ENCODE measurements at regions of chr17 and their contacts with region 1.

Region 1: GRCh38 chr17:73371285-73371684 is 59.5 kb upstream of the CDC42EP4 start:
- DNase-seq: no peak
- H3K4me3 Mint-ChIP-seq: no peak overlapping the region
- H3K27ac Mint-ChIP-seq: no peak overlapping the region
- H3K4me1 Mint-ChIP-seq: no peaks in the 10 kb centered on the region
- H3K27me3 Mint-ChIP-seq: peaks cover 7% of the 10 kb centered on the region

Region 2: DNA sequence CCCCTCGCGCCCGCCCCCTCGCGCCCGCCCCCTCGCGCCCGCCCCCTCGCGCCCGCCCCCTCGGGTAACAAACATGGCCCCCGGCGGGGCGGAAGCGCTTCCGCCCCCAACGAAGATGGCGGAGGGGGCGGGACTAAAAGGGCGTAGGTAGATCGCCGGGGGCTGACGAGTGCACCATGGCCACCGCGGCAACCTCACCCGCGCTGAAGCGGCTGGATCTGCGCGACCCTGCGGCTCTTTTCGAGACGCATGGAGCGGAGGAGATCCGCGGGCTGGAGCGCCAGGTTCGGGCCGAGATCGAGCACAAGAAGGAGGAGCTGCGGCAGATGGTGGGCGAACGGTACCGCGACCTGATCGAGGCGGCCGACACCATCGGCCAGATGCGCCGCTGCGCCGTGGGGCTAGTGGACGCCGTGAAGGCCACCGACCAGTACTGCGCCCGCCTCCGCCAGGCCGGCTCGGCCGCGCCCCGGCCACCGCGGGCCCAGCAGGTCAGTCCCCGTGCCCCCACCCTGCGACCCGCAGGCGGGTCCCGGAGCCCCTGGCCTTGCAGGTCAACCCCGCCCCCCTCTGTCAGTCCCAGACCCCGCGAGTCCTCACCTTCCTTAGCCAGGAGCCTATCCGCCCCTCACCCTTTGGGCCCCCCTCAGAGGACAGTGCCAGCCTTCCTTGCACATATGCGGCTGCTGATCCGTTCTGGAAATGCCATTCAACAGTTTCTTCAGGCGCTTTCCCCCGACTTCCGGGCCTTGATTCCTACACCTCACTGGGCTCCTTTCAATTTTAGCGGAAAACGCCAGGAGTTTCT is 178.2 kb before region 1 on chr17 and contains the start of gene COG1:
- intact Hi-C with region 1: loop called (anchors 1 kb)
- DNase-seq: peak; percentile 90
- H3K4me3 Mint-ChIP-seq: peak within 1 kb of the TSS; percentile 93
- H3K27ac Mint-ChIP-seq: peak within 1 kb of the TSS; percentile 97
- H3K4me1 Mint-ChIP-seq: peaks cover 18% of the 10 kb centered on the region
- H3K27me3 Mint-ChIP-seq: no peaks in the 10 kb centered on the region
- total RNA-seq, gene COG1: 30.0 and 32.7 TPM in 2 replicates

Region 3: GRCh38 chr17:73255671-73256181 is 115.6 kb before region 1 on chr17:
- intact Hi-C with region 1: loop called (anchors 1 kb)
- DNase-seq: peak; percentile 87
- H3K4me3 Mint-ChIP-seq: no peak overlapping the region
- H3K27ac Mint-ChIP-seq: no peak overlapping the region
- H3K4me1 Mint-ChIP-seq: no peaks in the 10 kb centered on the region
- H3K27me3 Mint-ChIP-seq: peaks cover 2% of the 10 kb centered on the region

Region 4: DNA sequence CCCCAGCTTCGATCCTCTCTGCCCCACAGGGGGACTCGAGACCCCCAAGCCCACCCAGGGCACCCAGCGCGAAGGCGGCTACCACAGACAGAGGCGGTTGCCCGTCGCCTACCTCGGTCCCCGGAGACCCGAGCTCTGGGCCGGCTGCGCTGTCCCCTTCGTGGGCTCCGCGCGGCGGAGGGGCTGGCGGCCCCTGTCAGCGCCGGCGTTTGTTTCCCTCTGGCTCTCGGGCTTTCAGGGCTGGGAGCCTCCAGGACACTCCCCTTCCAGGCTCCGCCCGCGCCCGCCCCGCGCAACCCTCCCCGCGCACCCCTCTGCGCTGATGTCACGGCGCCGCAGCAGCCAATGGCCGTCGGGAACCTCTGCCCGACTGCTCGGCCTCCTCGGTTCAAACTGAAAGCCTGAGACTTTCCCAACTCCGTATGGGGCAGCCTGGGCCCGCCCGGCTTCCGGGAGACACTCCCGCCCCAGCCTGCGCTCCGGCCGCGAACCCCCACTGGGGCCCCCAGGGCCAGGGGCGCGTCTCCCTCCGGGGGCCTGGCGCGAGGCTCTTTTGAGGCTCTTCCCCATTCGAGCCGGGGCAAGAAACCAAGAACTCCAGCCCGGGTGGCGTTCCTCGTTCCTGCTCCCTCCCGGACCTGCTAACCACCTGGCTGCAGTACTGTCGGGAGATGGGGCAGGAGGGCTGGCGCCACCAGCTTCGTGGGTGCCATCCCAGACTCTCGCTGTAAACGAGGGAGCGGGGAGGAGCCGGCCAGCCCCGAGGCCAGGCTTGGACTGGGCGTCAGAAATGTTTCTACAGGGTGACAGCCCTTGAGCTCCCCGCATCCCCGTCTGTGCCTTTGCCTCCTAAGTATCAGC is 59.3 kb before region 1 on chr17 and contains the start of gene CDC42EP4:
- intact Hi-C with region 1: loop called (anchors 2 kb)
- DNase-seq: peak; percentile 97
- H3K4me3 Mint-ChIP-seq: peak within 1 kb of the TSS; percentile 86
- H3K27ac Mint-ChIP-seq: peak within 1 kb of the TSS; percentile 25
- H3K4me1 Mint-ChIP-seq: peaks cover 5% of the 10 kb centered on the region
- H3K27me3 Mint-ChIP-seq: peaks cover 9% of the 10 kb centered on the region
- total RNA-seq, gene CDC42EP4: 0.86 and 0.95 TPM in 2 replicates

Region 5: GRCh38 chr17:73325527-73325842 is 45.8 kb before region 1 on chr17:
- intact Hi-C with region 1: no loop called
- DNase-seq: no peak
- H3K4me3 Mint-ChIP-seq: no peak overlapping the region
- H3K27ac Mint-ChIP-seq: no peak overlapping the region
- H3K4me1 Mint-ChIP-seq: no peaks in the 10 kb centered on the region
- H3K27me3 Mint-ChIP-seq: peaks cover 4% of the 10 kb centered on the region

Region 6: DNA sequence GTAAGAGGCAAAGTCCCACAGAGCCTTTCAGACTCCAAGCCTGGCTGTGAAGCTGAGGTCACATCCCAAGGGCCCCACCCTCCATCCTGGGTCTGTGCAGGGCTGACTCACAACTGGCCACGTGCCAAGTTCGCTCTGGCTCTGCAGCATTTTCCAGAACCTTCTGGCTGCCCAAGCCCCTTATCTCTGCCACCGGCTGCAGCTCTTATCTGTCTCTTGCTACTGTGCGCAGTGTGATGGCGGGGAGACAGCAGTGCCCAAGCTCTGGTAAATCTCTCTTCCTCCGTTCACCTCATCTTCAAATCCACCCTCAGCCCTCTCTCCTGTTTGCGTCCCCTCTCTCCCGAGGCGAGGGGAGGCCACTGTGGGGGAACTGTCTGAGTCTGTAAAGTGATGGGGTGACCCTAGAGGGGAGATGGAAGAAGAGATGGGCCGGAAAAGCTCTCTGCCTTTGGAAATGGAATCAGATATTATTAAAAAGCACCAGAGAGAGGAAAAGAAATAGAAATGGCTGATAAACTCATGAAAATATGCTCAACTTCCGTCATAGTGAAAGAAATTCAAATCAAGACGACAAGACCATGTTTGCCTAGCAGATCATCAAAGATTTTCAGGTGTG is 103.2 kb after region 1 on chr17:
- intact Hi-C with region 1: no loop called
- DNase-seq: no peak
- H3K4me3 Mint-ChIP-seq: no peak overlapping the region
- H3K27ac Mint-ChIP-seq: no peak overlapping the region
- H3K4me1 Mint-ChIP-seq: no peaks in the 10 kb centered on the region
- H3K27me3 Mint-ChIP-seq: peaks cover 6% of the 10 kb centered on the region

Measured in activated CD4-positive, alpha-beta T cell treated with anti-CD3 and anti-CD28 coated beads, Interleukin-2, amount 10 ng/mL, durations not matched to agents 24 days and 14 days (primary cell).